WTC11 (cell line): ENCODE measurements at regions of chr17 and their contacts with region 1.

Region 1: DNA sequence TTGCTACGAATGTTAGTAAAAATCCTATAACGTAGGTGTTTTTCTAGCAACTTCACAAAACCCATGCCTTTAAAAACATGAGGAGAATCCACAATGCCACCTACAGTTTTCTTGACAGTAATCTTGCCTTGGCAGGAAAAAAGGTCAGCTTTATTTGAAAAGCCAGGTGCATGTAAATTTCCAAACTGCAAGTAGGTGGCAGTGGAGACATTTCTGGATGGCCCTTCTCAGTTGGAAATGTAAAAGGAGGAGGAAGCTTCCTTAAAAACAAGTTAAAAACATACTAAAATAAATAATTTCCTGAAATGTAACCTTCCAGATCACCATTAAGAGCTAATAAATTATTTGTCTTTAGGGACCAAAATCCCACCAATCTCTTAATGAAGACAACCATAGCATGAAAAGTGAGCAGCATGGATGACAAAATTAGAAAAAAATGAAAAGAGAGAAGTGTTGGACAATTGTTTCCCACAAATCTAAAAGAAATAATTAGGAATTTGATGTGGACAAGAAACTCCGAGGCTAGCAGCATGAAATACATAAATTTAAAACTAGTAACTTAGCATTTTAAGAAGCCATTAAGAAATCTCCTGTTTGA is 152.2 kb downstream of the SNX11 start:
- DNase-seq: no peak
- ATAC-seq: no peak
- H3K4me3 Mint-ChIP-seq: no peak overlapping the region
- H3K27ac Mint-ChIP-seq: no peak overlapping the region
- H3K4me1 Mint-ChIP-seq: peaks cover 33% of the 10 kb centered on the region
- H3K27me3 Mint-ChIP-seq: no peaks in the 10 kb centered on the region
- CTCF ChIP-seq: 0 out of 2 replicates have a peak, but pooled peaks have one; percentile 19

Region 2: DNA sequence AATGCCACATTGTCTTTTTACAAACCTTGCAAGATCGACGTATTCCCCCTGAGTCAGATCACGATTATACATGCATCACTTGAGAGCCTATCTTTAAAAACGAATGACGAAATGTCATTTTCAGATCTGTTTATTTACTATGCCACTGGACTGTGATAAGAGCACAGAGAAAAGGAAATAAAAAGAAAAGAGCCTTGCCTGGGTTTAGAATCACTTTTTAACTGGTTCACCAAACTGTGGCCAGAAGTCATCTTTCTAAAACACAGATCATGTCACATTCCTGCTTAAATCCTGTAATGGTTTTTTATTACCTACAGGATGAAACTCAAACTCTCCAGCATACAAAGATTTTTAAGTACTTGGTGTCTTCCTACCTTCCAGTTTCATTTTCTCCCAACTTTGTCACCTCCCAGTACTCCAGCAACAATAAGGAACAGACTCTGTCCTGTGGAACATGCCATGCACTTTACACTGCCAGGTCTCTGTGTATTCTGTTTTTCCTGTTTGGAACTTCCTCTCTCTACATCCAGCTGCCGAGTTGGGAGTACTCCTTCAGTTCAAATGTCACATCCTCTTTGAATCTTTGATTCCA is 60.7 kb before region 1 on chr17:
- CTCF ChIA-PET with region 1: no interaction called
- POLR2A ChIA-PET with region 1: no interaction called
- DNase-seq: no peak
- ATAC-seq: no peak
- H3K4me3 Mint-ChIP-seq: no peak overlapping the region
- H3K27ac Mint-ChIP-seq: no peak overlapping the region
- H3K4me1 Mint-ChIP-seq: peaks cover 10% of the 10 kb centered on the region
- H3K27me3 Mint-ChIP-seq: peaks cover 61% of the 10 kb centered on the region
- CTCF ChIP-seq: no peak

Region 3: GRCh38 chr17:48215583-48216139 is 44.1 kb before region 1 on chr17:
- CTCF ChIA-PET with region 1: interaction called, 37 read pairs
- POLR2A ChIA-PET with region 1: no interaction called
- DNase-seq: peak; percentile 49
- ATAC-seq: peak; percentile 94
- H3K4me3 Mint-ChIP-seq: no peak overlapping the region
- H3K27ac Mint-ChIP-seq: no peak overlapping the region
- H3K4me1 Mint-ChIP-seq: peaks cover 11% of the 10 kb centered on the region
- H3K27me3 Mint-ChIP-seq: peaks cover 37% of the 10 kb centered on the region
- CTCF ChIP-seq: peak; percentile 42

Region 4: DNA sequence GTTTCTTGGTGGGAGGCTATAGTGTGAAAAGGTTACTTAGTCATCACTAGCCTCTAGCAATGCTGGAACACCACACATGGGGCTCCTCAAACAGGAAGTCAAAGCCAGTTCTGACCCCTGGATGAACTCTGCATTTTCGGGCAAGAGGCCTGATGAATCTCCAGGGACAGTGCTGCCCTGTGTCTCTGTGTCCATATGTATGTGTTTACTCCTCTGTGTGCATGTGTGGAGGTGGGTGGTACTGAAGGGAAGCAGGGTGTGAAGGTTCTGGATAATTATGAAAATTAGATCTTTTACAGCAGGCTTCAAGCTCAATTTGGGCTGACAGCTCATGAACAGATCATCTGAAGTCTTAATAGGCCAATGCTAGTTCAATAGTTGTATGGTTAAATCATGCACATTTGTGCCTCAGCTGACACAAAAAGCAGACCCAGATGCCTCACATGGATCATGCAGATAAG is 18.6 kb before region 1 on chr17:
- CTCF ChIA-PET with region 1: interaction called, 83 read pairs
- POLR2A ChIA-PET with region 1: no interaction called
- DNase-seq: no peak
- ATAC-seq: no peak
- H3K4me3 Mint-ChIP-seq: no peak overlapping the region
- H3K27ac Mint-ChIP-seq: no peak overlapping the region
- H3K4me1 Mint-ChIP-seq: peaks cover 25% of the 10 kb centered on the region
- H3K27me3 Mint-ChIP-seq: peaks cover under 1% of the 10 kb centered on the region
- CTCF ChIP-seq: no peak

Region 5: DNA sequence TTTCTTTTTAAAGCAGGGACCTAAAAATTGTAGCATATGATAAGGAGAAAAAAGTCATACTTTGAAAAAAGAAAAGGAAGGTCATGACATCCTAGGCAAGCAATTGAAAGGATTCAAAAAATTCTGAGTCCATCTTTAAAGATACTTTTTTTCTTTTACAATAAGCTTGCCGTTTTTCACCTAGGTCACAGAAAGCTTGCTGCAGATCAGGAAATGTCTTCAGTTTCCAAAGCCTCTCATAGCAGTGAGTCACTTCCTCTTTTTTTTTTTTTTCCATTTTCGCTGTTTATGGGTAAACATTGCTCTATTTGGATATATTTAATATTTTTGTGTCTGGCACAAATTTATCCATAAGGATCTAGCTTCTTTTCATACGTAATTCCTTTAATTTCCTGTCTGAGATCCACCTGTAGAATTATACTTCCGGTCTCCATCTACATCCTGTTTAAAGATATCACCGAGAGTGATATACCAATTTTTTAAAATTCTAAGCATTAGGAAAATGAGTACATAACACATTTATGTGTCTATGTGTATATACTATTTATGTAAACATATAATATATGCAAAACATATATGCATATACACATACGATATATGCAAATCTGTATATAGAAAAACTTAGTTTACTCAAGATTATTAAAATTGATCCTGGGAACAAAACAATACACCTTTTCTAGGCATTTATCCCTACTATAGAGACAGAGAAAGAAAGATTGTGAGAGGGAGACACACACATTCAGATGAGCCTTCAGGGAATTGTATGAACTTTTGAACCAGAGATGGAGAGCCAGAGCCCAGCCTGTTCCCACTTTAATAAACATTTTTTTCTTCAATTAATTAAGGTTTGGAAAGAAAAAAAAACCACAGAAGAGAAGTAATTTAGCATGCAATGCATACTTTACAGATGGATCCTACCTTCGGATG is 35.8 kb after region 1 on chr17:
- CTCF ChIA-PET with region 1: interaction called, 14 read pairs
- POLR2A ChIA-PET with region 1: no interaction called
- DNase-seq: no peak
- ATAC-seq: no peak
- H3K4me3 Mint-ChIP-seq: no peak overlapping the region
- H3K27ac Mint-ChIP-seq: no peak overlapping the region
- H3K4me1 Mint-ChIP-seq: peaks cover 5% of the 10 kb centered on the region
- H3K27me3 Mint-ChIP-seq: no peaks in the 10 kb centered on the region; the same call in 1 of the 2 replicates
- CTCF ChIP-seq: no peak

Region 6: DNA sequence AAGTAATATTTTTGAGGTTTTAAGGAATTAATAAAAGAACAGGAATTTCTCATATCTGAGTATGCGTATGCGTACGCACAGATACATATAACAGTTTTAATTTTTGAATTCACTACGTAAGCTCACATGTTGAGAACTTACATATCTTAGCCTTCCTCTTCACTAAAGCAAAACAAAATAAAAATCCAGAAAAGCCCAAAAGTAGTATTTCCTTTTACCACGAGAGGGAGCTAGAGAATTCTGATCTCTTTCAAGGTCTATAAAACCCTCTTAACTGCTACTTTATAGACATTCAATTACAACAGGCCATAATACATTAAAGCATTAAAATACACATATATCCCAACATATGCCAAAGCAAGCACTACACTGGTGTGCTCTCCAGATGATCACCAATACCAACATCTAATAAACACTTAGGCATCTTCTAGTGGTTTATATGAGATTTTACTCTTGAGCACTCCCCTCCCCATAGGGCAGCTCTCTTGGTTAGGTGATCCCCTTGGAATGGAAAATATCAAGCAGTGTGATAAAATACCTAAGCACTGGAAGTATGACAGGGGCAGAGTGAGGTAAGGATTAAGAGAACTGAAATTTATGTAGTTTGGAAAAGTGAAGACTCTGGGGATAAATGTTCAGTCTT is 76.2 kb after region 1 on chr17:
- CTCF ChIA-PET with region 1: interaction called, 11 read pairs
- POLR2A ChIA-PET with region 1: no interaction called
- DNase-seq: no peak
- ATAC-seq: no peak
- H3K4me3 Mint-ChIP-seq: no peak overlapping the region
- H3K27ac Mint-ChIP-seq: no peak overlapping the region
- H3K4me1 Mint-ChIP-seq: no peaks in the 10 kb centered on the region
- H3K27me3 Mint-ChIP-seq: peaks cover 44% of the 10 kb centered on the region
- CTCF ChIP-seq: peak; percentile 61; the same call in 1 of the 2 replicates